Heart right ventricle (tissue), 16 donors: ENCODE measurements at regions of chr12 and their contacts with region 1.

Region 1: GRCh38 chr12:119208622-119209061 is 29.9 kb downstream of the HSPB8 start:
- DNase-seq: peak; percentile 82 to 90
- ATAC-seq: peak; percentile 88 to 95 (median 93)
- H3K4me3 ChIP-seq: no peak overlapping the region
- H3K27ac ChIP-seq: peak overlapping the region in 8 of 10 donors; percentile 49 to 83 (median 77)
- H3K4me1 ChIP-seq: peaks cover 5 to 51% (median 30%) of the 10 kb centered on the region in 9 donors
- H3K27me3 ChIP-seq: no peaks in the 10 kb centered on the region
- CTCF ChIP-seq: no peak

Region 2: GRCh38 chr12:119115296-119115905 is 93.2 kb before region 1 on chr12:
- intact Hi-C with region 1: loop called in 2 of 10 experiments (anchors 5 to 10 kb)
- DNase-seq: peak in 1 of 2 donors; percentile 51
- ATAC-seq: peak in 6 of 8 donors; percentile 43 to 69 (median 57)
- H3K4me3 ChIP-seq: no peak overlapping the region
- H3K27ac ChIP-seq: no peak overlapping the region
- H3K4me1 ChIP-seq: peaks cover 0 to 6% (median 0%) of the 10 kb centered on the region in 9 donors
- H3K27me3 ChIP-seq: peaks cover 0 to 7% (median 0%) of the 10 kb centered on the region in 7 donors
- CTCF ChIP-seq: peak; percentile 85 to 96 (median 93)

Region 3: GRCh38 chr12:119176267-119176849 is 32.3 kb before region 1 on chr12:
- intact Hi-C with region 1: loop called in 1 of 10 experiments (anchors 1 kb)
- DNase-seq: peak; percentile 86 to 94
- ATAC-seq: peak; percentile 38 to 74 (median 69)
- H3K4me3 ChIP-seq: peak overlapping the region; percentile 15 to 61 (median 48)
- H3K27ac ChIP-seq: peak overlapping the region; percentile 35 to 99 (median 86)
- H3K4me1 ChIP-seq: peaks cover 0 to 49% (median 22%) of the 10 kb centered on the region in 9 donors
- H3K27me3 ChIP-seq: peaks cover 0 to 13% (median 0%) of the 10 kb centered on the region in 7 donors
- CTCF ChIP-seq: no peak

Region 4: DNA sequence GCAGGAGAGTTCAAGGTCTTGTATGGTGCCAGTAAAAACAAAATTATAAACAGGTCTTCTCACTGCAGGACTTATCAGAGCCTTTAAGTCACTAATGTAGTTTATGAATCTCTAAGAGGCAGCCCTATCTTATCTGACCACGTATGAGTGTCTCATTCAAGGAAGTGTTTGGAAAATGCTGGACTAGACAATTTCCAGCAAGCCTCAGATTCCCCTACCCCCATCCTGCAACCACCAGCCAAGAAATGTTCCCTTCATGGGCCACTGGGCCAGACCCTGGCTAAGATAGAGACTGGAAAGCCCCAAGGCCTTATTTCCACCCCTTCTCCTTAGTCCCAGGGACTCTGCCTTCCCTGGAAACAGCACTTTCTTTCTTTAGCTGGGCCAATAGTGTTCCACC is 25.5 kb before region 1 on chr12:
- intact Hi-C with region 1: loop called in 2 of 10 experiments (anchors 1 to 2 kb)
- DNase-seq: peak in 1 of 2 donors; percentile 41
- ATAC-seq: peak in 2 of 8 donors; percentile 15 to 24
- H3K4me3 ChIP-seq: peak overlapping the region; percentile 12 to 89 (median 71)
- H3K27ac ChIP-seq: peak overlapping the region; percentile 49 to 99 (median 92)
- H3K4me1 ChIP-seq: peaks cover 7 to 65% (median 32%) of the 10 kb centered on the region in 9 donors
- H3K27me3 ChIP-seq: peaks cover 0 to 11% (median 0%) of the 10 kb centered on the region in 7 donors
- CTCF ChIP-seq: no peak

Region 5: DNA sequence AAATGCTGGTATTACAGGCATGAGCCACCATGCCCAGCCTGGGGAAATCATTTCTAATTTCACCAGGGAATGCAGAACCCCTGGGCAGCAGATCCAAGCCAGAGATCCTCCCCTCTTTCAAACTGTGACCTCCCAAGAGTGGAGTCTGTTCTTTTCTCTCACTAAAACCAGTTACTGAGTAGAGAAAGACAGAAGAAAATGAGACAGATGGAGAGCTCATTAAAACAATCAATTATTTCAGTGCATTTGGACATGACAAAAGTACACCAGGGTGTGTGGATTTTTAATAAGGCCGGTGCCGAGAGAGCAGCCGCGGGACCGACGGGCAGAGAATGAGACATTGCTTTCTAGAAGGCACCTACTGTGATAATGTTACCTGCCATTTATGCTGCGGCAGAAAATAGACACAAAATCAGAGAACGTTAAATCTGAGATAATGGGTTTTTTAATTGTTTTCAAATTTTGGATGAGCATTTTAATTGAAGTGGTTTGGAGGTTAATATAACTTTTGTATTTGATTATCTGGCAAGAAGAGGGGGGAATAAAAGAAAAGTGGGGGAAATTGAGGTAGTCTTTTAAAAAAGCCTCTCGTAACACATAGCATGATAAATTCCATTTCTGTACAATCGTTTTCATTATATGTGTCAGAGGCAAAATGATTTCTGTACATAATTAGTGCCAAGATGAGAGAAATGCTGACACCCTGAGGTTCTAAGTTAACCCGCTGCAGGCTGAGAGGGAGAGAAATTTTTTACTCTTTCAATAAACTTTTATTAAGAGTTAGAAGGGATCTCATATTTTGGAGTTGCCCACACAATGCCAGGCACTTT is 40.9 kb after region 1 on chr12:
- intact Hi-C with region 1: loop called in 2 of 10 experiments (anchors 2 kb)
- DNase-seq: no peak
- ATAC-seq: no peak
- H3K4me3 ChIP-seq: no peak overlapping the region
- H3K27ac ChIP-seq: peak overlapping the region in 6 of 10 donors; percentile 41 to 63 (median 52)
- H3K4me1 ChIP-seq: peaks cover 2 to 31% (median 15%) of the 10 kb centered on the region in 9 donors
- H3K27me3 ChIP-seq: no peaks in the 10 kb centered on the region
- CTCF ChIP-seq: peak in 1 of 9 donors; percentile 7

Region 6: DNA sequence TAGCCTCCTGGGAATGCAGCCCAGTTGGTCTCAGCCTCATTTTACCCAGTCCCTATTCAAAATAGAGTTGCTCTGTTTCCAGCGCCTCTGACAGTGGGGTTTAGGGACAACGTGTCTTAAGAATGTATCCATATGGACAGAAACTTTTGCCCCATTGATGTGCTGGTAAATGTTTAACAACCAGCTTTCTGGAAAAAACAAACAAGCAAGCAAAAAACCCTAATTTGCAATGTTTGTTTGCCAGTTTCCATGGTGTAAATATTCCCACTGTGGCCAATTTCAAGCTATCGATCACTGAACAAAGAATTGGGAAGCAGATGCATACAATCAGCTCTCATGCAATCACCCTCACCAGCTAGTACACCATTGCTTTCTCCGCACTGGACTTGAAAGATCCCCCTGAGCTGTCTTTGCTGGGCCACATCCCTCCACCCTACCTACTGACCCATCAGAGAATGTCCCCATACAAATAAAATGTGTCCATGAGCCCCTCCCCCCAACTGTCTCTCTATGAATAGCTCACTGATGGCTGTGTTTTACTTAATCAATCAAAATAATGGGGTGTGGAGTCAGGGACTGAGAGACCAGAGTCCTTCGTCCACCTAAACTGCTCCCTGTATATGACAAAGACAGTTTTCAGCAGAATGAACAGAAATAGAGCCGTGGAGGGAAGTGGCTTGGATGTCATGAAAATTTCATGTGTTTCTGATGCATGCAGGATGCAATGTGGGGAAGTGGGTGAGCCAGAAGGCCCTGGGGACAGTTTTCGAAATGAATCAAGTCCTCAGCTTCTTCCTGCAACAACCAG is 166.6 kb after region 1 on chr12:
- intact Hi-C with region 1: loop called in 1 of 10 experiments (anchors 10 kb)
- DNase-seq: no peak
- ATAC-seq: peak in 4 of 8 donors; percentile 38 to 48 (median 44)
- H3K4me3 ChIP-seq: no peak overlapping the region
- H3K27ac ChIP-seq: peak overlapping the region in 8 of 10 donors; percentile 19 to 75 (median 62)
- H3K4me1 ChIP-seq: peaks cover 0 to 64% (median 26%) of the 10 kb centered on the region in 9 donors
- H3K27me3 ChIP-seq: no peaks in the 10 kb centered on the region
- CTCF ChIP-seq: no peak

Region 7: GRCh38 chr12:119412811-119413794 is 204.5 kb after region 1 on chr12:
- intact Hi-C with region 1: loop called in 1 of 10 experiments (anchors 10 kb)
- DNase-seq: peak; percentile 44 to 72
- ATAC-seq: peak; percentile 26 to 80 (median 64)
- H3K4me3 ChIP-seq: no peak overlapping the region
- H3K27ac ChIP-seq: no peak overlapping the region
- H3K4me1 ChIP-seq: peaks cover 0 to 16% (median 5%) of the 10 kb centered on the region in 9 donors
- H3K27me3 ChIP-seq: no peaks in the 10 kb centered on the region
- CTCF ChIP-seq: peak; percentile 68 to 94 (median 87)